MCF 10A (cell line): ENCODE measurements at regions of chr11 and their contacts with region 1.

Region 1: DNA sequence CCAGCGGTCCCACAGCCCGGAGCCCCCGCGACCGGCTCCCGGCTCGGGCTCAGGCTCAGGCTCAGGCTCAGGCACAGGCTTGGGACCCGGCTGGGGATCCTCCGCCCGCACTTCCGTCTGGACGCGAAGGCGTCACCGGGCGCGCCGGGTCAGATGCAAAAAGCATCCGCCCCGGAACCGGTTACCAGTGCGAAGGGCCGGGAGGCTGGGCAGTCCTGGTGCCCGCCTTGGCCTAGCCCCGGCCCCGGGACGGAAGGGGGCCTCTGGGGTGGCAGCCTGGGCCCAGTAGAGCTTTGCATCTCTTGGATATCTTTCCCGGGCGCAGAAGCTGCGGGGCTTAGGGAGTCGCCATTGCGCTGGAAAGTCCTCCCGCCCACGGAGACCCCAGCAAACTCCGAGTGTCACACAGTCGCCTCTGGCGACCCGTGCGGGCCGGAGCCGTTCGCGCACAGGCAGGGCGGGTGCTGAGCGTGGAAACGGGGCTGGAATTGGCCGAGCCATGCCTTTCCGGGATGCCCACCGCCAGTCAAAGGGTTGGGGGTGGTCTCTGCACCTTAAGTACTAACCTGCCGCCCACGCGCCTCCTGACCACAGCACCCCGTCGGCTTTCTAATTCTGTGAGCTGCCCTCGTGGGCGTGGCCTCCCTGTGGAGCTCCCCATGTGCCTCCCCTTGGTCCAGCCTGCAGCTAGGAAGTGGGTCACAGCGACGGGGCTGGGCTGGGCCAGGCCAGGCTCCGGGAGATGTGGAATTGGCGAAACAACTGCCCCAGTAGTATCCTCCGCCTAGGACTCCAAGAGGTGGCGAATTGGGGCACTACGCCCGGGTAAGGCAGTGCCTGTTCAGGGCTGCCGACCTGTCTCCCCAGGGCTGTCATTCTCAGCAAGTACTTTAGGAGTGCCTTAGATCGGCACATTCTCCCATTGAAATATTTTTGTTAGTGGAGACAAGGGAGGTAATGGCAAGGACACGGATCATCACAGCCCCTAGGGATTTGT is at the start of gene TMEM9B:
- DNase-seq: peak; percentile 92
- H3K4me3 Mint-ChIP-seq: peak within 1 kb of the TSS; percentile 85
- H3K27ac Mint-ChIP-seq: peak within 1 kb of the TSS; percentile 72
- H3K4me1 Mint-ChIP-seq: peaks cover 20% of the 10 kb centered on the region
- H3K27me3 Mint-ChIP-seq: no peaks in the 10 kb centered on the region
- CTCF ChIP-seq: no peak
- total RNA-seq, gene TMEM9B: 30.0 and 35.3 TPM in 2 replicates

Region 2: GRCh38 chr11:8566613-8567210 is 397.9 kb before region 1 on chr11:
- CTCF ChIA-PET with region 1: interaction called, 13 read pairs
- POLR2A ChIA-PET with region 1: interaction called, 3 read pairs
- intact Hi-C with region 1: no loop called
- DNase-seq: peak; percentile 59
- H3K4me3 Mint-ChIP-seq: no peak overlapping the region
- H3K27ac Mint-ChIP-seq: no peak overlapping the region
- H3K4me1 Mint-ChIP-seq: peaks cover 6% of the 10 kb centered on the region
- H3K27me3 Mint-ChIP-seq: peaks cover 38% of the 10 kb centered on the region
- CTCF ChIP-seq: peak; percentile 64

Region 3: DNA sequence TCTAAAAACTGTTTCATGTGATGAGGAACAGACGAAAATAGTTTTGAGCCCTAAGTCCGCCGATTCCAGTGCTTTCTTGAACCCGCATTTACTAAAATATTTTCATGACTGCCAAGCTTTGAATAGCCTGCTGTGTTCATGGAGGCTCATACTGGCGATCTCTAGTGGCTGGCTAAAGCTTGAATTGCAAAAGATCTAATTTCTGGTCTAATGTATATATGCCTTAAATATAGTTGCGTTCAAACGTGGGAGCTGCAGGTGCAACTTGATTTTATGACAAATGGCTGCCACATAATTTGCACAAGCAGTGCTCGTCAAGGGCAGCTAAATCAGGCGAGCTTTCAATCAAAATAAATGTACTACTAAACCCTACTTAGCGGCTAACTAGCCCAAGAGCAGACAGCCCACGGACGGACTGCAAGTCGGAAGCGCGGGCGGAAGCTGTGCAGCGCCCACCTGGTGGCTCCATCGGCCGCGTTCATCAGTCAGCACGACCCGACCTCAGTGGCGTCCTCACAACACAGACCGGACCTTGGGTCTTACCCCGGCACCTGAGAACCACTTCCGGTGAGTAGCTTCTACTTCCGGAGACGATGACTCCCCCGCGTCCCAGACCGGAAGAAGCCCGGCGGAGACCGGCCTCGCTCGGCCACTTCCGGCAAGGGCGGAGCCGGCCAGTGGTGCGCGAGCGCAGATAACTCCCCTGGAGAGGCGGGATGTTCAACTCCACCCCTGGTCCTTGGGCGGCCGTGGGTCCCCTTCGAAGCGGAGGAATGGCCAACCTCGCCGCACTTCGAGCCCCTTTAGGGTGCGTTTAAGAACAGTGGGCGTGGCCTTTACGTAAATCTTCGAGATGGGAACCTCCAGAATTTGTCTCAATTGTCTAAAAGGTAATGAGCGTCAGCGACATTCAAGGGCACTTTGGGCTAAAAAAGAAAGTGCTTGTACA is 275.9 kb before region 1 on chr11:
- CTCF ChIA-PET with region 1: interaction called, 12 read pairs
- POLR2A ChIA-PET with region 1: interaction called, 36 read pairs
- intact Hi-C with region 1: loop called (anchors 1 kb)
- DNase-seq: peak; percentile 97
- H3K4me3 Mint-ChIP-seq: peak overlapping the region; percentile 75
- H3K27ac Mint-ChIP-seq: peak overlapping the region; percentile 87
- H3K4me1 Mint-ChIP-seq: peaks cover 33% of the 10 kb centered on the region
- H3K27me3 Mint-ChIP-seq: no peaks in the 10 kb centered on the region
- CTCF ChIP-seq: no peak

Region 4: DNA sequence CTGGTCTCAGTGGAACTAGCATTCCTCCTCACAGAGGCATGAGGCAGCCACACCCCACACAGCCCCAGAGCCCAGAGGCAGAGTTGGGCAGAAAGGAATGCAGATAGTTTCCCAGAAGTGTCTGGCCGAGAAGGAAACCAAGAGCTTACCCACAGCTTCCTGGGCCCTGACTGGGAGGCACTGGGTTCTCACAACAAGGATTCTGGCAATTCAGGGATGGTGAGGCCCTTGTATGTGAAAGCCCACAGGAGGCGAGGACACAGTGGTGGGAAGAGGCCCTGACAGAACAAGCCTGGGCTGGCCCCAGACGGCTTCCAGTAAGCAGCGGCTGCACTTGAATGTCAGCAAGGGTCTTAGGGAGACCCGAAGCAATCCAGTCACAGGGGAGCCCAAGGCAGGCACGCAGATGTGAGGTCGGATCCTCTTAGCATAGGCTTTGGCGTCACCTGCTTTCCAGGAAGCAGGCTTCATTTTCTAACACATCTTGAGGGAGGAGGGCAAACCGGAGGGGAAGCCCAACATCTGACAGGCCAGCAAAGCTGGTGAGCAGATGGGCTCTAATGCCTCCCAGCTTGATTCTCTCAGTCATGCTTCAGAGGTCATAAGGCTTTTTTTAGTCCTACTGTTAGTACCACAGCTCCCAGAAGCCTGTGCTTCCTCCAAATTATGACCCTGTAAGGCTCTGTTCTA is 131.9 kb before region 1 on chr11:
- CTCF ChIA-PET with region 1: interaction called, 12 read pairs
- POLR2A ChIA-PET with region 1: interaction called, 4 read pairs
- intact Hi-C with region 1: no loop called
- DNase-seq: peak; percentile 79
- H3K4me3 Mint-ChIP-seq: peak overlapping the region; percentile 35
- H3K27ac Mint-ChIP-seq: peak overlapping the region; percentile 98
- H3K4me1 Mint-ChIP-seq: peaks cover 27% of the 10 kb centered on the region
- H3K27me3 Mint-ChIP-seq: no peaks in the 10 kb centered on the region
- CTCF ChIP-seq: no peak

Region 5: GRCh38 chr11:8917157-8917825 is 47.3 kb before region 1 on chr11:
- CTCF ChIA-PET with region 1: interaction called, 155 read pairs
- POLR2A ChIA-PET with region 1: interaction called, 29 read pairs
- intact Hi-C with region 1: loop called (anchors 1 kb)
- DNase-seq: peak; percentile 64
- H3K4me3 Mint-ChIP-seq: peak overlapping the region; percentile 49
- H3K27ac Mint-ChIP-seq: peak overlapping the region; percentile 72
- H3K4me1 Mint-ChIP-seq: peaks cover 24% of the 10 kb centered on the region
- H3K27me3 Mint-ChIP-seq: no peaks in the 10 kb centered on the region
- CTCF ChIP-seq: no peak

Region 6: DNA sequence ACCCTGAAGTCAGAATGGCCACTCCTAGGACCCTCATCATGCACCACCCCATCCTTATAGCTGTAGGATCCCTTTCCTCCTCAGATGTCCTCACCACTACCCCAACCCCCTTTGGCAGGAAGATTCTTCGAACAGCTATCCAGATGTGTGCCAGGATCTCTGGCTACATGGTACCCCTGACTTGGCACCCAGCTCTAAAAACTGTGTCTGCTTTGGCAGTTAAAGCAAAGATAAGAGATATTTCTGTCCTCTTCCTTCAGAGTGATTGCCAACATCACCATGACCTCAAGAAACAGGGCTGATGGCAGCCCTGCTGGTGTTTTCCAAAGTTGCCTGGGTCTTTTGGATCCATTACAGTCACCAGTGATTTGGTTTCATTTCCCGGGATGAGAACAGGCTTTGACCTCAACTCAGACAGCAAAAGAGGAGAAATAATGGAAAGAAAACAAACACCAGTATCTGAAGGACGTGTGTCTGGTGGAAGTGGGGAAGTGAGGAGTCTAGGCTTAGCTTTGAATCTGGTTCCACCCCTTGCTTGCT is 43.5 kb after region 1 on chr11:
- CTCF ChIA-PET with region 1: no interaction called
- POLR2A ChIA-PET with region 1: no interaction called
- intact Hi-C with region 1: no loop called
- DNase-seq: no peak
- H3K4me3 Mint-ChIP-seq: no peak overlapping the region
- H3K27ac Mint-ChIP-seq: no peak overlapping the region
- H3K4me1 Mint-ChIP-seq: peaks cover 4% of the 10 kb centered on the region
- H3K27me3 Mint-ChIP-seq: peaks cover 14% of the 10 kb centered on the region
- CTCF ChIP-seq: no peak

Region 7: DNA sequence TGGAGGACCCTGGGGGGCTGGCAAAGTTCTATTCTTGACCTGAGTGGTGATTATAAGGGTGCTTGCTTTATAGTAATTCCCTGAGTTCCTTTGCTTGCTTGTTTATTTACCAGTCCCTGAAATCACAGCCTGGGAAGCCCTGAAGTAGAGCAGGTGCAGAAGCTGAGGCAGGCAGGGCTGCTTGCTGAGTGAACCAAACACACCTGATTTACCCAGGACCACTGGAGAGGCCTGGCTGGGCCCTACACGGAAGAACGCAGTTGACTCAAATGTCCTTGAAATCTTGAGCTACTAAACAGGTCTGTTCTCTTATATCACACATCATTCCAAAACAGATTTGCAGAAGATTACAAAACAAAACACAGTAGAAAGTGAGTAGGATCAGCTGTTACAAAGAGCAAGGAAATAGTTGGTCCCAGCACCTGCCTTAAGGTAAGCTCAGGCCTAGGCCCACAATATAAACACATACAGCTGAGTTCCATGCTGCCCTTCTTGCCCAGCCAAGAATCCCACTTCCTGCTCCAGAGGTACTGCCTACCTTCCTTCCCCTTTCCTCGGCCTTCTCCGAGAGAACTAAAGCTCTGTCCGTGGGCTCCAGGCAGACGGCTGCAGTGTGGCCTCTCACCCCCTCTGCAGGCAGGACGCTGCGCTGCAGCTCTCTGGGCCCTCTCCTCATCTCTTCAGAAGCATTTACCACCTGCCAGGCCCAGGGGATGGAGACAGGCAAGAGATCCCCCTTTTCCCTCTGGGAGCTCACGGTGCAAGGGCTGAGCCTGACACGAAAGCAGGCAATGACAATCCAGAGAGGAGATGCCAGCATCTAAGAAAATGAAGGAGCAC is 172.9 kb after region 1 on chr11:
- CTCF ChIA-PET with region 1: interaction called, 29 read pairs
- POLR2A ChIA-PET with region 1: interaction called, 23 read pairs
- intact Hi-C with region 1: loop called (anchors 1 kb)
- DNase-seq: peak; percentile 77
- H3K4me3 Mint-ChIP-seq: no peak overlapping the region
- H3K27ac Mint-ChIP-seq: peak overlapping the region; percentile 2
- H3K4me1 Mint-ChIP-seq: peaks cover 34% of the 10 kb centered on the region
- H3K27me3 Mint-ChIP-seq: no peaks in the 10 kb centered on the region
- CTCF ChIP-seq: peak; percentile 95